Activated CD4-positive, alpha-beta memory T cell treated with anti-CD3 and anti-CD28 coated beads for 36 hours (primary cell): ENCODE measurements at regions of chr3 and their contacts with region 1.

Region 1: GRCh38 chr3:192917404-192918274 is at the start of gene MB21D2:
- DNase-seq: peak; percentile 69
- H3K4me3 Mint-ChIP-seq: peak within 1 kb of the TSS; percentile 89
- H3K27ac Mint-ChIP-seq: peak within 1 kb of the TSS; percentile 91
- H3K4me1 Mint-ChIP-seq: peaks cover 43% of the 10 kb centered on the region
- H3K27me3 Mint-ChIP-seq: peaks cover 43% of the 10 kb centered on the region
- total RNA-seq, gene MB21D2: 8.7 to 9.1 TPM

Region 2: GRCh38 chr3:192772240-192772894 is 145.3 kb before region 1 on chr3:
- CTCF ChIA-PET with region 1: no interaction called
- POLR2A ChIA-PET with region 1: no interaction called
- intact Hi-C with region 1: no loop called
- DNase-seq: no peak
- H3K4me3 Mint-ChIP-seq: no peak overlapping the region
- H3K27ac Mint-ChIP-seq: no peak overlapping the region
- H3K4me1 Mint-ChIP-seq: no peaks in the 10 kb centered on the region
- H3K27me3 Mint-ChIP-seq: peaks cover 2% of the 10 kb centered on the region

Region 3: GRCh38 chr3:192816351-192816750 is 101.3 kb before region 1 on chr3:
- CTCF ChIA-PET with region 1: interaction called, 10 read pairs
- POLR2A ChIA-PET with region 1: interaction called, 14 read pairs
- intact Hi-C with region 1: loop called (anchors 1 kb)
- DNase-seq: no peak
- H3K4me3 Mint-ChIP-seq: no peak overlapping the region
- H3K27ac Mint-ChIP-seq: no peak overlapping the region
- H3K4me1 Mint-ChIP-seq: peaks cover 45% of the 10 kb centered on the region
- H3K27me3 Mint-ChIP-seq: no peaks in the 10 kb centered on the region

Region 4: GRCh38 chr3:192851821-192852424 is 65.7 kb before region 1 on chr3:
- CTCF ChIA-PET with region 1: interaction called, 5 read pairs
- POLR2A ChIA-PET with region 1: interaction called, 4 read pairs
- intact Hi-C with region 1: loop called (anchors 1 kb)
- DNase-seq: no peak
- H3K4me3 Mint-ChIP-seq: no peak overlapping the region
- H3K27ac Mint-ChIP-seq: no peak overlapping the region
- H3K4me1 Mint-ChIP-seq: peaks cover 57% of the 10 kb centered on the region
- H3K27me3 Mint-ChIP-seq: no peaks in the 10 kb centered on the region

Region 5: GRCh38 chr3:192899540-192899982 is 18.1 kb before region 1 on chr3:
- CTCF ChIA-PET with region 1: interaction called, 9 read pairs
- POLR2A ChIA-PET with region 1: interaction called, 7 read pairs
- intact Hi-C with region 1: loop called (anchors 1 kb)
- DNase-seq: peak; percentile 37
- H3K4me3 Mint-ChIP-seq: no peak overlapping the region
- H3K27ac Mint-ChIP-seq: peak overlapping the region; percentile 90
- H3K4me1 Mint-ChIP-seq: peaks cover 54% of the 10 kb centered on the region
- H3K27me3 Mint-ChIP-seq: peaks cover 8% of the 10 kb centered on the region

Region 6: DNA sequence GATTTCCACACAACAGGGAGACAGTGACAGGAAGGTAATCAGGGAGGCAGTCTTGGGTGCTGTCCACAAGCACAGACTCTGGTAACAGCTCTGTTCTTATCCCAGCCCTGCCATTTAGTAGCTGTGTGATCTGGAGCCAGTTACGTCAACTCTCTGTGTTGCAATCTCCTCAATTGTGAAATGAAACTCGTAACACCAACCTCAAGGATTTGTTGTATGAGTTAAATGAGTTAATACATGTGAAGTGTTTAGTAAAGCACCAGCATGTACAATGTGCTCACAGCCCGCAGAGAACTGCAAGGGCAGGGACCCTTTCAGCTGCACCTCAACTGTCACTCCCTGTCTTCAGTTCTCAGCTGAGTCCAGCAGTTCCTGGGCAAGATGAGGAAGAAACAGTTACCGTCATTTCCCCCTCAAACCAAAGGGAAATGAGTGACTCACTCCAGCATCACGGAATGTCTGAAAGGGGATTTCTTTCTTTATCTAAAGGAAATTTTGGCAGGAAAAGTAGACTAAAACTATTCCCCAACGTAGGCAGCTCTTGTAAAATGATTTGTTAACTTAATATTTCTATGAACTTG is 39.9 kb after region 1 on chr3:
- CTCF ChIA-PET with region 1: interaction called, 3 read pairs
- POLR2A ChIA-PET with region 1: interaction called, 4 read pairs
- intact Hi-C with region 1: loop called (anchors 2 kb)
- DNase-seq: peak; percentile 28
- H3K4me3 Mint-ChIP-seq: no peak overlapping the region
- H3K27ac Mint-ChIP-seq: no peak overlapping the region
- H3K4me1 Mint-ChIP-seq: peaks cover 24% of the 10 kb centered on the region
- H3K27me3 Mint-ChIP-seq: no peaks in the 10 kb centered on the region